GM10248 (cell line): ENCODE measurements at regions of chr15 and their contacts with region 1.

Region 1: DNA sequence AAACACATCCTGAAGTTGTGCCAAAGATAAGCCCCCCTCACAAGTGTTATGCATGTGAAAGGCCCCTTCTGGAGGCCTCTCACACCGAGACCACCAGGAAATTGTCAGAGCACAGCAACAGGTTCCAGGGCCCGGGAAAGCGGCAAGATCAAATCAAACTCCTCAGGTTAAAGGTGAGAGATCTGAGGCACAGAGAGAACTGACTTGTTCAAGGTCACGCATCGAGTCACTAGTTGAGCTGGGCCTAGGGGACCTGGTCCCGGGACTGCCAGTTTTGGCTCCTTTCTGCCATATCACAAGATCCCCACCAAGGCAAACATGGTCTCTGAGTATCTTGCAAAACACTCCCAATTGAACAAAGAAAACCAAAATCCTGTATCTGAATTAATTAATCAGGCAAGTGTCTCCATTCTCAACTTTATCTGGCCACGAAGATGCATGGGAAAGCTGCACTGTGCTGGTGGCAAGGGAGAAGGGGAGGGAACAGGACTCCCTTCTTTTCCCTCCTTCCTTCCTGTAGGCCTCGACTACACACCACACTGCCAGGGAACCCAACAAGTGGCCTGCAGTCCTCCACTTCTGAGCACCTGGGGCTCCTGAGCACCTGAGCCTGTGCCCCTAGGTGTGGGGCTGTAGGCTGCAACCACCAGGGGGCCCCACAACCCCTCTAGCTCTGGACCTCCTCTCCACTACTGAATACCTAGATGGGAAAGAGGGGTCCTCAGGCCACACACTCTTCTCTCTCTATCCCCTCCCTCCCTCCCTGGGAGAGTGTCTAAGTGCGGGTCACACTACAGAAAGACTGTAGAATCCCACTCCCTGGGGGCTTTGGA is 37.3 kb downstream of the ANP32A start:
- DNase-seq: peak; percentile 70
- CTCF ChIP-seq: peak; percentile 73

Region 2: DNA sequence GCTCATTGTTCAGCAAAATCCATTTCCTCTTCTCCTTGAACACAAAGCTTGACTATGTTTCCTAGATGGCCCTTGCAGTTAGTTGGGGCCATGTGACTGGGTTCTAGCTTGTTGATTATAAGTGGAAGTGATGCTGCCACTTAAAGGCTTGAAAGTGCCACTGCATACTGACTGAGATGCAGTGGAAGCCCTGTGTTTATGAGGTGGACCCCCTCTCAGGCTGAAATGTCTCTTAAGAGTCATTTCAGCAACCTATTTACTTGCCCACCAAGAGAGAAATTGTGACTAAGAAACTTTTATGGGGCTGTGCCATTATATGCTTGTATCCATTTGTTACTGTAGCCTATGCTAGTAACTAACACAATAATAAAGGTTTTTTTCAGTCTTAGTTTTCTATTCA is 45.6 kb after region 1 on chr15:
- CTCF ChIA-PET with region 1: interaction called, 36 read pairs
- POLR2A ChIA-PET with region 1: no interaction called
- DNase-seq: peak; percentile 42
- CTCF ChIP-seq: peak; percentile 68